HepG2 (cell line): ENCODE measurements at regions of chr18 and their contacts with region 1.

Region 1: GRCh38 chr18:59837586-59837985 is 62.2 kb upstream of the PMAIP1 start:
- DNase-seq: peak; percentile 52
- ATAC-seq: peak; percentile 84
- H3K4me3 ChIP-seq: no peak overlapping the region
- H3K27ac ChIP-seq: no peak overlapping the region
- H3K4me1 ChIP-seq: no peaks in the 10 kb centered on the region
- H3K27me3 ChIP-seq: 0 out of 5 replicates have a peak, but pooled peaks cover 0 to 6% of the 10 kb centered on the region in 2 experiments
- CTCF ChIP-seq: peak; percentile 78
- EP300 ChIP-seq: no peak
- POLR2A ChIP-seq: no peak
- RAD21 ChIP-seq: peak; percentile 40; the same call in 1 of the 2 replicates

Region 2: GRCh38 chr18:59612381-59612780 is 225.2 kb before region 1 on chr18:
- CTCF ChIA-PET with region 1: no interaction called
- POLR2A ChIA-PET with region 1: no interaction called
- in situ Hi-C with region 1: no loop called
- intact Hi-C with region 1: no loop called
- DNase-seq: no peak
- ATAC-seq: no peak
- H3K4me3 ChIP-seq: no peak overlapping the region
- H3K27ac ChIP-seq: no peak overlapping the region
- H3K4me1 ChIP-seq: no peaks in the 10 kb centered on the region
- H3K27me3 ChIP-seq: peaks cover 0 to 9% of the 10 kb centered on the region in 2 experiments; a peak in 2 of 5 replicates
- CTCF ChIP-seq: no peak
- EP300 ChIP-seq: no peak
- POLR2A ChIP-seq: no peak
- RAD21 ChIP-seq: no peak

Region 3: DNA sequence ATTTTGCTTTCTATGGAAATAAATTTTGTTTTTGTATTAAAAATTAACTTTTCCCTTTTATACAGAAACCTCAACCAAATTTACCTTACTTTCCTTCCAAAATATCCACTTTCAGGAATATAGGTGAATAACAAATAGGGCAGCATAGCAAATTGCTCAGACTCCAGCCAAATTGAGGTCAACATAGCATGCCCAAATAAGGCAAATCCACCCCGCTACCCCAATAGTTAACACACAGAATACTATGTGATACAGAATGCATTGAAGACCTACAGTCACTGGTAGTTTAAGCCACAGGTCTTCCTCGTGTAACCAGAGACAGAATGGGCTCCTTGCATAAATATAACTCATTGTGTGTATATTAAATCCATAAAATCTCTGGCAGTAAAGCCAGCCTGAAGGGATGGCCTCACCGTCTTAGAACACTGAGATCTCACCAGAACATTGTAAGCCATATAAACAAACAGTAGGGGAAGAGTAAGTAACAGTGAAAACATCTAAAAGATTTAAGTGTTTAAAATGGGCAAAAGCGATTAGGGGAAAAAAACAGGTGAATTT is 134.4 kb after region 1 on chr18:
- CTCF ChIA-PET with region 1: no interaction called
- POLR2A ChIA-PET with region 1: no interaction called
- in situ Hi-C with region 1: no loop called
- intact Hi-C with region 1: loop called (anchors 10 kb)
- DNase-seq: no peak
- ATAC-seq: no peak
- H3K4me3 ChIP-seq: no peak overlapping the region
- H3K27ac ChIP-seq: no peak overlapping the region
- H3K4me1 ChIP-seq: no peaks in the 10 kb centered on the region
- H3K27me3 ChIP-seq: peaks cover 0 to 2% of the 10 kb centered on the region in 2 experiments; a peak in 1 of 5 replicates
- CTCF ChIP-seq: no peak
- EP300 ChIP-seq: no peak
- POLR2A ChIP-seq: no peak
- RAD21 ChIP-seq: no peak

Region 4: GRCh38 chr18:59996370-59996966 is 158.9 kb after region 1 on chr18:
- CTCF ChIA-PET with region 1: no interaction called
- POLR2A ChIA-PET with region 1: no interaction called
- in situ Hi-C with region 1: no loop called
- intact Hi-C with region 1: loop called (anchors 5 kb)
- DNase-seq: peak; percentile 15
- ATAC-seq: peak; percentile 67
- H3K4me3 ChIP-seq: no peak overlapping the region
- H3K27ac ChIP-seq: no peak overlapping the region
- H3K4me1 ChIP-seq: no peaks in the 10 kb centered on the region
- H3K27me3 ChIP-seq: no peaks in the 10 kb centered on the region
- CTCF ChIP-seq: peak; percentile 52
- EP300 ChIP-seq: no peak
- POLR2A ChIP-seq: no peak
- RAD21 ChIP-seq: no peak

Region 5: GRCh38 chr18:60413944-60414547 is 576.5 kb after region 1 on chr18:
- CTCF ChIA-PET with region 1: no interaction called
- POLR2A ChIA-PET with region 1: no interaction called
- in situ Hi-C with region 1: no loop called
- intact Hi-C with region 1: loop called (anchors 10 kb)
- DNase-seq: peak; percentile 2
- ATAC-seq: peak; percentile 85
- H3K4me3 ChIP-seq: no peak overlapping the region
- H3K27ac ChIP-seq: no peak overlapping the region
- H3K4me1 ChIP-seq: no peaks in the 10 kb centered on the region
- H3K27me3 ChIP-seq: no peaks in the 10 kb centered on the region
- CTCF ChIP-seq: peak; percentile 62
- EP300 ChIP-seq: no peak
- POLR2A ChIP-seq: no peak
- RAD21 ChIP-seq: no peak

Region 6: GRCh38 chr18:60549338-60549960 is 711.9 kb after region 1 on chr18:
- CTCF ChIA-PET with region 1: interaction called, 5 read pairs
- POLR2A ChIA-PET with region 1: no interaction called
- in situ Hi-C with region 1: loop called (anchors 25 kb)
- intact Hi-C with region 1: loop called (anchors 5 kb)
- DNase-seq: peak; percentile 44
- ATAC-seq: no peak
- H3K4me3 ChIP-seq: no peak overlapping the region
- H3K27ac ChIP-seq: no peak overlapping the region
- H3K4me1 ChIP-seq: no peaks in the 10 kb centered on the region
- H3K27me3 ChIP-seq: no peaks in the 10 kb centered on the region; a peak in 1 of 5 replicates
- CTCF ChIP-seq: peak; percentile 63
- EP300 ChIP-seq: no peak
- POLR2A ChIP-seq: no peak
- RAD21 ChIP-seq: peak; percentile 24; the same call in 1 of the 2 replicates